ENCODE measurements at regions of chr3 and their contacts with region 1.

Region 1: DNA sequence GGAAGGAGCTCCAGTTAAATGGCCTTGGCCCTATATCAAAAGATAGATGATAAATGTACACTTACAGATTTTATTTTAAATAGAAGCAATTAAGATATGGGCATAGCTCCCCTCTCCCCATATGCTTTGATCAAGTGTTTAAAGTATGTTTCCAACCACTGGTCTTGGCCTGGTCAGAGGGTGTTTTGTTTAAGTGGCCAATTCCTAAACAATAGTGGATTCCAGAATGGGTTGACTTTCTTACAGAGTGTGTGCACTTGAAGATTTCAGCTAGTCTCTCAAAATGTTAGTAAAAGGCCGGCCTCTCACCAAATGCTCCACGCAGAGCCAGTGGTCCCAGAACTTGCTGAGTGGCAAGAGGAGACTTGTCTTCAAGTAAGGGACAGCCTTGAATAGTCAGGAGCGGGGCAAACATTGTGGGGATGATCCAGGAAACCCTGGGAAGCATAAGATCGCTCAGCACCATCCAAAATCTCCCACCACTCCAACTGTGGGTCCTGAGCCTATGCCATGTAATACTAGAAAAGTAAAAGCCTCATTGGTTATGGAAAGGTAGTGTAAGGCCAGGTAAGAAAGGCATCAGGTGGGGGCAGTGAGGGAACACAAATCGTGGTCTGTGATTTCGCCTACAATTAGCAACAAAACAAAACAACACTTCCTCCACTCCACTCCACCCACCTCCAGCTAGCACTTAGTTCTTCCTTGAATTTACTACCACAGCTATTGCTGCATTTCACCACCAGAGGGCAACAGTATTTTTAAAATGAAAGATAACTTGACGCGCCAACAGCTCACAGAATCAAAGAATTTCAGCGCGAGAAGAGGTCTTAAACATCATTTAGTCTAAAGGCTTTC is 4.8 kb downstream of the RARRES1 start:
- DNase-seq: no peak
- H3K4me3 ChIP-seq: no peak overlapping the region
- H3K27ac ChIP-seq: no peak overlapping the region
- H3K4me1 ChIP-seq: peaks cover 0 to 9% (median 6%) of the 10 kb centered on the region in 4 experiments; a peak in 5 of 7 replicates
- H3K27me3 ChIP-seq: peaks cover 0 to 11% (median 6%) of the 10 kb centered on the region in 4 experiments; a peak in 6 of 7 replicates
- CTCF ChIP-seq: peak in 2 of 3 experiments; percentile 60 to 83; a peak in 3 of 4 replicates
- EP300 ChIP-seq: no peak
- POLR2A ChIP-seq: no peak
- RAD21 ChIP-seq: peak; percentile 62 to 67

Region 2: GRCh38 chr3:158659454-158660237 is 67.8 kb before region 1 on chr3:
- CTCF ChIA-PET with region 1: interaction called, 15 read pairs
- POLR2A ChIA-PET with region 1: no interaction called
- DNase-seq: peak in 1 of 2 experiments; percentile 64
- H3K4me3 ChIP-seq: no peak overlapping the region
- H3K27ac ChIP-seq: no peak overlapping the region
- H3K4me1 ChIP-seq: no peaks in the 10 kb centered on the region
- H3K27me3 ChIP-seq: no peaks in the 10 kb centered on the region
- CTCF ChIP-seq: peak; percentile 33 to 62 (median 46)
- EP300 ChIP-seq: no peak
- POLR2A ChIP-seq: no peak
- RAD21 ChIP-seq: peak; percentile 16 to 49; a peak in 3 of 4 replicates

Region 3: GRCh38 chr3:158753854-158754253 is 26.4 kb after region 1 on chr3:
- CTCF ChIA-PET with region 1: interaction called, 14 read pairs
- POLR2A ChIA-PET with region 1: no interaction called
- DNase-seq: no peak
- H3K4me3 ChIP-seq: no peak overlapping the region
- H3K27ac ChIP-seq: no peak overlapping the region
- H3K4me1 ChIP-seq: no peaks in the 10 kb centered on the region
- H3K27me3 ChIP-seq: no peaks in the 10 kb centered on the region
- CTCF ChIP-seq: no peak
- EP300 ChIP-seq: no peak
- POLR2A ChIP-seq: no peak
- RAD21 ChIP-seq: no peak

Region 4: DNA sequence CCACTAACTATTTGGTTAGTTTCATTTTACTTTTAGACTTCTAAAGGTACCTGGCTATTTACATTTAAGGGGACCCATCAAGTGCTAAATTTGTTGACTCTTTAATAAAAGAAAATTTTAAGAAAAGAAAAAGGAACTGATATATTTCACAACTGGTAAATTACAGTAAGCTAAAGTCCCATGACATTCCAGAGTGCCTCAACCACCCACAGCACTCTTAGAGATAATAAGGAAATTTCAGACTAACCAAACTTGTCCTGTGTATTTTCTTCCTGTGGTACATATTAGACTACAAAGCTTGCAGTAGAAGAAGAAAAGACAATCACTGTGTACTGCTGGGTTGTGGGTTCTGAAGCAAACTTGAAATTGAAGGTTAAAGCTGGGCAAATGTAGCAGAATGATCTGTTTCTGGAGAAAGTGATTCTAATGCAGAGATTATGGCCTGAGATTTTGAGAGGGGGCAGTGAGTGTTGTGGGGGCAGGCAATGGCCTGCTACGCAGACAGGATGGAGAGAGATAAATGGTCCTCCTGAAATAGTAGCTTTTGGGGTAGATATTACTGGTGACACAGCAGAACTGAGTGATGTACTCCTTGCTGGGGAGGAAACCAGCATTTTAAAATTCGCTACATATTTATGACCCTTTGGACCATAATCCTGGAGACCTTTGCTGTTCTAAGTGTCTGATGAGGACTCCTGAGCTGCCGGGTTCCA is 49.9 kb after region 1 on chr3:
- CTCF ChIA-PET with region 1: interaction called, 12 read pairs
- POLR2A ChIA-PET with region 1: no interaction called
- DNase-seq: no peak
- H3K4me3 ChIP-seq: no peak overlapping the region
- H3K27ac ChIP-seq: no peak overlapping the region
- H3K4me1 ChIP-seq: no peaks in the 10 kb centered on the region
- H3K27me3 ChIP-seq: no peaks in the 10 kb centered on the region
- CTCF ChIP-seq: no peak
- EP300 ChIP-seq: no peak
- POLR2A ChIP-seq: no peak
- RAD21 ChIP-seq: no peak

Region 5: DNA sequence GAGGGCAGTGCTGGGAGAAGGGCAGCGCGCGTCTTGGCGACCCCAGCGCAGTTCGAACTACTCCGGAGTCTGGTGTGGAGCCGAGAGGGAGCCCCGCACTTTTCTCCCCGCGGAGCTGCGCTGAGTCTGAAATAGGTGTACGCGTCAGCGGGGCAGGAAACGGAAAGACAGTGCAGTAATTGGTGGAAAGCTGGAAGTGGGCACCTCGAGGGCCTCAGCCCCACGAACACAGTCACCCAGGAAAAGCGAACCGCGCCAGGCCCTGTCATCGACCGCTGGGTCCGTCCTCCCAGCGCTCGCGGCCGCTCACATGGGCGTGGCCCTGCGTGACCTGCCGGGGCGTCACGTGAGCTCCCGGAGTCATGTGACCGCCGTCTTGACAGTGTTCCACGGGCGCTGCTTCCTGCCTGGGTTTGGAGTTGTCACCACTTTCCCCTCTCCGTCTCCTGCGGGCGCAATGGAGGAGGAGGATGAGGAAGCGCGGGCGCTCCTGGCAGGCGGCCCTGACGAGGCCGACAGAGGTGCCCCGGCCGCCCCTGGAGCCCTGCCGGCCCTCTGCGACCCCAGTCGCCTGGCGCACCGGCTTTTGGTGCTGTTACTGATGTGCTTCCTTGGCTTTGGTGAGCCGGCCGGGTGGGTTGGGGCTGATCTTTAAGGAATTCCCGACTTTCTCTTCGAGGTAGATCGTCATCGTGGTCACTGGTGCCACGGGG is 74.4 kb after region 1 on chr3 and contains the start of gene MFSD1:
- CTCF ChIA-PET with region 1: interaction called, 11 read pairs
- POLR2A ChIA-PET with region 1: no interaction called
- DNase-seq: peak in 1 of 2 experiments; percentile 89
- H3K4me3 ChIP-seq: peak within 1 kb of the TSS; percentile 48 to 90 (median 82)
- H3K27ac ChIP-seq: no peak within 1 kb of the TSS
- H3K4me1 ChIP-seq: peaks cover 0 to 9% (median 2%) of the 10 kb centered on the region in 4 experiments; a peak in 2 of 7 replicates
- H3K27me3 ChIP-seq: peaks cover 8 to 18% (median 15%) of the 10 kb centered on the region in 4 experiments
- CTCF ChIP-seq: no peak
- EP300 ChIP-seq: peak in 1 of 2 experiments; percentile 17; a peak in 1 of 3 replicates
- POLR2A ChIP-seq: peak in 1 of 2 experiments; percentile 50; a peak in 2 of 3 replicates
- RAD21 ChIP-seq: no peak
- total RNA-seq, gene MFSD1: 9.3 and 11.0 TPM in 2 replicates

Measured in H1 (cell line).